PC-9 (cell line): ENCODE measurements at regions of chr3 and their contacts with region 1.

Region 1: GRCh38 chr3:127035677-127036076 is 52.8 kb downstream of the PLXNA1 start:
- DNase-seq: peak; percentile 74 to 90
- H3K4me3 ChIP-seq: no peak overlapping the region
- H3K27ac ChIP-seq: no peak overlapping the region
- H3K4me1 ChIP-seq: peaks cover 15% of the 10 kb centered on the region
- H3K27me3 ChIP-seq: no peaks in the 10 kb centered on the region
- CTCF ChIP-seq: no peak

Region 2: GRCh38 chr3:127304121-127304744 is 268.6 kb after region 1 on chr3:
- CTCF ChIA-PET with region 1: interaction called, 16 read pairs
- POLR2A ChIA-PET with region 1: interaction called, 11 read pairs
- intact Hi-C with region 1: no loop called
- DNase-seq: peak; percentile 50 to 71
- H3K4me3 ChIP-seq: peak overlapping the region; percentile 40; the same call in 1 of the 2 replicates
- H3K27ac ChIP-seq: no peak overlapping the region
- H3K4me1 ChIP-seq: peaks cover 9% of the 10 kb centered on the region; the same call in 1 of the 2 replicates
- H3K27me3 ChIP-seq: peaks cover 44% of the 10 kb centered on the region
- CTCF ChIP-seq: peak; percentile 14; the same call in 1 of the 2 replicates